CD4-positive, alpha-beta T cell (primary cell): ENCODE measurements at regions of chr3 and their contacts with region 1.

Region 1: GRCh38 chr3:33131331-33132018 is 17.7 kb downstream of the CRTAP start:
- DNase-seq: peak in 9 of 14 experiments; percentile 5 to 67 (median 18)
- ATAC-seq: peak; percentile 67
- H3K4me3 ChIP-seq: no peak overlapping the region
- H3K4me3 Mint-ChIP-seq: no peak overlapping the region
- H3K27ac ChIP-seq: no peak overlapping the region
- H3K27ac Mint-ChIP-seq: no peak overlapping the region
- H3K4me1 ChIP-seq: no peaks in the 10 kb centered on the region
- H3K4me1 Mint-ChIP-seq: peaks cover 6% of the 10 kb centered on the region
- H3K27me3 ChIP-seq: no peaks in the 10 kb centered on the region
- H3K27me3 Mint-ChIP-seq: no peaks in the 10 kb centered on the region
- CTCF ChIP-seq: peak; percentile 90

Region 2: DNA sequence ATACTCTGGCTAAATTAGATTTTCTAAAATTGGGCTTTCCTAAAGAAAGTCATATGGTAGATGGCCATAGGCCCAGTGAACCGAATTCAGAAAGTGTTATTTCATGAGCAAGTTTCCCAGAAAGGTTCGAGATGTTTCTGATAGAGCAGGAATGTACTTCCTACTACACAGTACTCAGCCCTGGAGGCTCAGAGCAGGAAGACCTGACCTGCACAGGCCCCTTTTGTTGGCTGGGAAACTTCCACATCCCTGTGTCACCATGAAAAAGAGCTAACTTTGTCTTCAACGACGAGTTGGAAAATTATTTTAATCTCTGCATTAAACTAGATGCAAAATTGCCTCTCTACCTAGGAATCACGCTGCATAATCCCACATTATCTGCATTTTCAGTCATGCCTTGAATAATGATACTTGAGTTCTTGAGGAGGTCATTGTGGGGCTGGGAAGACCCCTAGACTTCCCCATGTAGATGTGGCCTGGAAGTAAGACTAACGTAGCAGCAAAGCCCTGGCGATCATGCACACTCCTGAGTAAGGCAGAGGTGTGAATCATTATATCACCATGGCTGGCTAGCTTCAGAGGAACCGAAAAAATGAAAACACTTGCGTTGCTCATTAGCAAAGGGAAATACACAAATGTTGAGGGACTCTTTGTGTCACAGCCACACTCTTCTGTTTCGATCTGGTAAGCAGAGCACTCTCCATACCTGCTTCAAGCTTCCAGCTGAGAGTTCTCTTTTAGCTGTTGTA is 692.7 kb before region 1 on chr3:
- CTCF ChIA-PET with region 1: no interaction called
- POLR2A ChIA-PET with region 1: no interaction called
- intact Hi-C with region 1: no loop called
- DNase-seq: peak in 2 of 14 experiments; percentile 35 to 40
- ATAC-seq: peak; percentile 50
- H3K4me3 ChIP-seq: no peak overlapping the region
- H3K4me3 Mint-ChIP-seq: peak overlapping the region; percentile 65
- H3K27ac ChIP-seq: peak overlapping the region in 1 of 2 donors; percentile 32
- H3K27ac Mint-ChIP-seq: peak overlapping the region; percentile 95
- H3K4me1 ChIP-seq: peaks cover 58% of the 10 kb centered on the region
- H3K4me1 Mint-ChIP-seq: peaks cover 72% of the 10 kb centered on the region
- H3K27me3 ChIP-seq: no peaks in the 10 kb centered on the region
- H3K27me3 Mint-ChIP-seq: no peaks in the 10 kb centered on the region
- CTCF ChIP-seq: no peak

Region 3: DNA sequence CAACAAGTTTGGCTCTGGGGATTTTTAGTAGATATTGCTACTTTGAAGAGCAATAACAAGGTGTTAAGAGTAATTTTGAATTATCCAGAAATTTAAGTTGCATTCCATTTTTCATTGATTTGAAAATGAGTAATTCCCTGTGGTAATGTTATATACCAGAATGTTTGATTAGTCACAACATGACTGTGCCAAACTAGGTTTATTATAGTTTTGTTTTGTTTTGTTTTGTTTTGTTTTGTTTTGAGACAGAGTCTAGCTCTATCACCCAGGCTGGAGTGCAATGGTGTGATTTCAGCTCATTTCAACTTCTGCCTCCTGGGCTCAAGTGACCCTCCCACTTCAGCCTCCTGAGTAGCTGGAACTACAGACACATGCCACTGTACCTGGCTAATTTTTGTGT is 405.8 kb before region 1 on chr3:
- CTCF ChIA-PET with region 1: no interaction called
- POLR2A ChIA-PET with region 1: no interaction called
- intact Hi-C with region 1: no loop called
- DNase-seq: no peak
- ATAC-seq: no peak
- H3K4me3 ChIP-seq: no peak overlapping the region
- H3K4me3 Mint-ChIP-seq: no peak overlapping the region
- H3K27ac ChIP-seq: no peak overlapping the region
- H3K27ac Mint-ChIP-seq: no peak overlapping the region
- H3K4me1 ChIP-seq: no peaks in the 10 kb centered on the region
- H3K4me1 Mint-ChIP-seq: no peaks in the 10 kb centered on the region
- H3K27me3 ChIP-seq: no peaks in the 10 kb centered on the region
- H3K27me3 Mint-ChIP-seq: no peaks in the 10 kb centered on the region
- CTCF ChIP-seq: no peak

Region 4: DNA sequence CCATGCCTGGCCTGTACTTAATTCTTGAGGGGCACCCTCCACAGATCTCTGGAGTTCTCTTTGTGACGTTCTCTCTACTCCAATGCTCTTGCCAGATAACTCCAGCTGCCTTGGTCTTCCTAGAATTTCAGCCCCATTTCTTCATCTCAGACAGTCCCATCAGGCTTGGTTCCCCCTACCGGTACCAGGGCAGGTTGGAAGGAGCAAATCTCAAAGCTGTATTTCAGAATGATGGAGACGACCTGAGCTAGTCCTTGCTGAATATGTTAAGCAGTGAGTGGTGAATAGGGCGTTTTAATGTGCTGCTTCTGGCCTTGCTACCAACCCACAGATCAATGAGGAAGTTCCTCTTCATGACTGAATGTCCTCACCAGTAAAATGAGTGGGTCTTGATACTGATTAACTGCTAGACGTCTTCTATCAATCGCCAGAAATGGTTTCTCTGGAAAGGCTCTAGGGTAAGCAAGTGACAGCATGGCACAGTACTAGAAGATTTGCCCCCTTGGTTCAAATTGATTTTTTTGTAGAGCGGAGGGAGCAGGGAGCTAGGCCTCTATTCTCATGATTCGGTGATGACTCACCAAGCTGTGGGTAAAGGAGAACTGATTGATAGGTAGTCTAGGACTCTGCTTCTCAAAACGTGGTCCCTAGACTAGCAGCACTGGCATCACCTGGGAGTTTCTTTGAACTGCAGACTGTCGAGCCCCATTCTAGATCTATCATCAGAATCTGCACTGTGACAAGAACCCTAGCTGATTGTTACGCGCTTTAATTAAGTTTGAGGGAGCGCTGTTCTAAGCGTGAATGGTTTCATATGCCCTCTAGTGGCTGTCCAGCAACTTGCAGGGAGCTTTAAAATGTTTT is 241.0 kb after region 1 on chr3:
- CTCF ChIA-PET with region 1: interaction called, 8 read pairs
- POLR2A ChIA-PET with region 1: no interaction called
- intact Hi-C with region 1: loop called (anchors 2 to 5 kb)
- DNase-seq: peak; percentile 6 to 67 (median 28)
- ATAC-seq: peak; percentile 75
- H3K4me3 ChIP-seq: no peak overlapping the region
- H3K4me3 Mint-ChIP-seq: no peak overlapping the region
- H3K27ac ChIP-seq: no peak overlapping the region
- H3K27ac Mint-ChIP-seq: no peak overlapping the region
- H3K4me1 ChIP-seq: peaks cover 5% of the 10 kb centered on the region
- H3K4me1 Mint-ChIP-seq: peaks cover 5% of the 10 kb centered on the region
- H3K27me3 ChIP-seq: no peaks in the 10 kb centered on the region
- H3K27me3 Mint-ChIP-seq: peaks cover 16% of the 10 kb centered on the region
- CTCF ChIP-seq: peak; percentile 91